Psoas muscle (tissue), 8 donors: ENCODE measurements at regions of chr1 and their contacts with region 1.

Region 1: DNA sequence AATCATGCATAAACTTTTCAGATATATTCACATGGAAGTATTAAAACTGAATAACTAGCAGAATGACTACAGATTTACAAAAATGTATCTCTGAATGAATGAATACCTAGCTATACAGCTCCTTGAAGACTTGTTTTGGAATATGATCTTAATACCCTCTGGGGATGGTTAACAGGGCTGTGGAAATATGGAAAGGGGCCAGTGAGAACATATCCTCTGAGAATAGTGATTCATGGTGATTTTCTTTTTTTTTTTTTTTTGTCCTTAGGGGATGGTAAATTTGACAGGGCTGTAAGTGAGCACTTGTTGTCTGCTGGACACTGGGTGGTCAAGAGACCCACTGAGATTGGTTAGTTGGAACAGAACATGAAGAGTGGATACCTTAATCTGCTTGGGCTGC is 80.7 kb upstream of the HP1BP3 start:
- DNase-seq: no peak
- ATAC-seq: peak in 1 of 4 donors; percentile 66
- H3K4me3 ChIP-seq: no peak overlapping the region
- H3K27ac ChIP-seq: no peak overlapping the region
- H3K4me1 ChIP-seq: no peaks in the 10 kb centered on the region
- H3K27me3 ChIP-seq: no peaks in the 10 kb centered on the region
- CTCF ChIP-seq: no peak

Region 2: DNA sequence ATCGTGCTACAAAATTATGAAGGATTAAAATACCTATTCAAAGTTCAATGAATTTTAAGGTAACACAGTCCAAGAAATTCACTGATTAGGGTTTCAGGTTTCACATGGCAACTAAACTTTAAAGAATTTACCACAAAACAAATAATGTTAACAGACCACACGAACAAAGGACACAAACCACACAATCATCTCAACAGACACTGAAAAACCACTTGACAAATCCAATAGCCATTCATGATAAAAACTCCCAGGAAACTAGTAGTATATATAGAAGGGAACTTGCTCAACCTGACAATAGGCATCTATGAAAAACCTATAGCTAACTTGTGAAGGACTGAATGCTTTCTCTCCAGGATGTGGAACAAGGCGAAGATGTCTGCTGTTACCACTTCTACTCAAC is 114.3 kb before region 1 on chr1:
- intact Hi-C with region 1: loop called in 1 of 2 experiments (anchors 5 kb)
- DNase-seq: no peak
- ATAC-seq: no peak
- H3K4me3 ChIP-seq: no peak overlapping the region
- H3K27ac ChIP-seq: no peak overlapping the region
- H3K4me1 ChIP-seq: no peaks in the 10 kb centered on the region
- H3K27me3 ChIP-seq: no peaks in the 10 kb centered on the region
- CTCF ChIP-seq: no peak